Right ventricle myocardium superior (tissue), 1 donor: ENCODE measurements at regions of chr10 and their contacts with region 1.

Region 1: GRCh38 chr10:89591111-89591795 is 53.8 kb downstream of the PANK1 start:
- DNase-seq: peak; percentile 49
- ATAC-seq: peak; percentile 65

Region 2: GRCh38 chr10:89643431-89644331 is 52.4 kb after region 1 on chr10:
- intact Hi-C with region 1: loop called (anchors 10 kb)
- DNase-seq: peak; percentile 80
- ATAC-seq: peak; percentile 74